A673 (cell line): ENCODE measurements at regions of chrX and their contacts with region 1.

Region 1: GRCh38 chrX:53768451-53768850 is 81.9 kb upstream of the HUWE1 start:
- DNase-seq: no peak
- H3K4me3 ChIP-seq: no peak overlapping the region
- H3K27ac ChIP-seq: no peak overlapping the region
- H3K4me1 ChIP-seq: no peaks in the 10 kb centered on the region
- H3K27me3 ChIP-seq: no peaks in the 10 kb centered on the region
- CTCF ChIP-seq: no peak

Region 2: DNA sequence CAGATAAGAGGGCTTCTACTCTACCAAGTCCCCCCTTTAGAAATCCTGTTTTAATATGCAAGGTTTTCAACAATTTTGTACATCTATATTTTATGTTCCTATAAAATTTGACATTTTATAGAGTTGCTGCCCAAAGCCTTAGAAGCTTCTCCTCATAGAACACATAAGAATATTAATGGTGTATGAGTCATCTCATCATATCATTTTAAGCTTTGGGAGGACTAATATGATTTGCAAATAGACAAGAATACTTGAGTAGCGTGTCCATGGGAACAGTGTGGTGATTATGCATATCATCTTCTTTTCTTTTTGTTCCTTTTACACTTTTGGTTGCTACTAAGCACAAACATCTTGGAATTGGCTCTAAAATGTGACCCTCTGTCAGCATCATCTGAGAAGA is 25.2 kb before region 1 on chrX:
- CTCF ChIA-PET with region 1: no interaction called
- POLR2A ChIA-PET with region 1: interaction called, 15 read pairs
- intact Hi-C with region 1: no loop called
- DNase-seq: peak; percentile 13
- H3K4me3 ChIP-seq: no peak overlapping the region
- H3K27ac ChIP-seq: no peak overlapping the region
- H3K4me1 ChIP-seq: no peaks in the 10 kb centered on the region
- H3K27me3 ChIP-seq: no peaks in the 10 kb centered on the region
- CTCF ChIP-seq: no peak

Region 3: DNA sequence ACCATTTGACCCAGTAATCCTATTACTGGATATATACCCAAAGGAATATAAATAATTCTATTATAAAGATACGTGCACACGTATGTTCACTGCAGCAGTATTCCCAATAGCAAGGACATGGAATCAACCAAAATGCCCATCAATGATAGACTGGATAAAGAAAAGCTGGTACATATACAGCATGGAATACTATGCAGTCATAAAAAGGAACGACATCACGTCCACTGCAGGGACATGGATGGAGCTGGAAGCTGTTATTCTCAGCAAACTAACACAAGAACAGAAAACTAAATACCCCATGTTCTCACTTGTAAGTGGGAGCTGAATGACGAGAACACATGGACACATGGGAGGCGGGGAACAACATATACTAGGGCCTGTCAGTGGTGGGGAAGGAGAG is 206.1 kb after region 1 on chrX:
- CTCF ChIA-PET with region 1: no interaction called
- POLR2A ChIA-PET with region 1: no interaction called
- intact Hi-C with region 1: no loop called
- DNase-seq: no peak
- H3K4me3 ChIP-seq: no peak overlapping the region
- H3K27ac ChIP-seq: no peak overlapping the region
- H3K4me1 ChIP-seq: no peaks in the 10 kb centered on the region
- H3K27me3 ChIP-seq: no peaks in the 10 kb centered on the region
- CTCF ChIP-seq: no peak